Caco-2 (cell line): ENCODE measurements at regions of chr20 and their contacts with region 1.

Region 1: DNA sequence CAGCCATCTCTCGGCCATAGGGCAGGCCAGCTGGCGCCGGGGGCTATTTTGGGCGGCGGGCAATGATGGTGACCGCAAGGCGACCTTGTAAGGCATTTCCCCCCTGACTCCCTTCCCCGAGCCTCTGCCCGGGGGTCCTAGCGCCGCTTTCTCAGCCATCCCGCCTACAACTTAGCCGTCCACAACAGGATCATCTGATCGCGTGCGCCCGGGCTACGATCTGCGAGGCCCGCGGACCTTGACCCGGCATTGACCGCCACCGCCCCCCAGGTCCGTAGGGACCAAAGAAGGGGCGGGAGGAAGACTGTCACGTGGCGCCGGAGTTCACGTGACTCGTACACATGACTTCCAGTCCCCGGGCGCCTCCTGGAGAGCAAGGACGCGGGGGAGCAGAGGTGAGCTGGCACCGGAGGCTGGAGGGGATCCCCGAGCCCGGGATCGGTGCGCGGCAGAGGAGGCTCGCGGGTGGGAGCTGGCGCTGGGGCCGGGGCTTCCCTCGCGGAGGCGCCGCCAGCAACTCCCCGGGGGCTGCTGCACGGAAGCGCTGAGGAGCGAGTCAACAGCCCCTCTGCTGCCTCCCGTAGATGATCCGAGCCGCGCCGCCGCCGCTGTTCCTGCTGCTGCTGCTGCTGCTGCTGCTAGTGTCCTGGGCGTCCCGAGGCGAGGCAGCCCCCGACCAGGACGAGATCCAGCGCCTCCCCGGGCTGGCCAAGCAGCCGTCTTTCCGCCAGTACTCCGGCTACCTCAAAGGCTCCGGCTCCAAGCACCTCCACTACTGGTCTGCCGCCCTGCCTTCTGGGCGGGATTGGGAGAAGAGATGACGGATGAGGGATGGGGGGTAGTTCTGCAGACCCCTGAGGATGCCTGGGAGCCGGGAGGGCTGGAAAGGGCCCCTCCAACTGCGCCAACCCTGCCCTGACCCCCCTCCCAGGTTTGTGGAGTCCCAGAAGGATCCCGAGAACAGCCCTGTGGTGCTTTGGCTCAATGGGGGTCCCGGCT is at the starts of genes CTSA and NEURL2:
- DNase-seq: peak; percentile 99
- H3K4me3 ChIP-seq: peak within 1 kb of the TSS; percentile 94
- H3K4me3 Mint-ChIP-seq: peak within 1 kb of the TSS; percentile 95
- H3K27ac Mint-ChIP-seq: peak within 1 kb of the TSS; percentile 95
- H3K4me1 ChIP-seq: peaks cover 8% of the 10 kb centered on the region
- H3K4me1 Mint-ChIP-seq: peaks cover 36% of the 10 kb centered on the region
- H3K27me3 ChIP-seq: no peaks in the 10 kb centered on the region
- H3K27me3 Mint-ChIP-seq: no peaks in the 10 kb centered on the region
- CTCF ChIP-seq: peak; percentile 10 to 34
- total RNA-seq, gene CTSA: 282 and 294 TPM in 2 replicates
- total RNA-seq, gene NEURL2: 12.6 TPM in 2 replicates

Region 2: GRCh38 chr20:45704969-45705637 is 186.2 kb before region 1 on chr20 and contains the start of gene WFDC10B:
- CTCF ChIA-PET with region 1: no interaction called
- POLR2A ChIA-PET with region 1: no interaction called
- intact Hi-C with region 1: no loop called
- DNase-seq: no peak
- H3K4me3 ChIP-seq: no peak within 1 kb of the TSS
- H3K4me3 Mint-ChIP-seq: no peak within 1 kb of the TSS
- H3K27ac Mint-ChIP-seq: no peak within 1 kb of the TSS
- H3K4me1 ChIP-seq: no peaks in the 10 kb centered on the region
- H3K4me1 Mint-ChIP-seq: no peaks in the 10 kb centered on the region
- H3K27me3 ChIP-seq: 0 out of 2 replicates have a peak, but pooled peaks cover 3% of the 10 kb centered on the region
- H3K27me3 Mint-ChIP-seq: peaks cover 18% of the 10 kb centered on the region
- CTCF ChIP-seq: no peak
- total RNA-seq, gene WFDC10B: not detected in 2 replicates

Region 3: DNA sequence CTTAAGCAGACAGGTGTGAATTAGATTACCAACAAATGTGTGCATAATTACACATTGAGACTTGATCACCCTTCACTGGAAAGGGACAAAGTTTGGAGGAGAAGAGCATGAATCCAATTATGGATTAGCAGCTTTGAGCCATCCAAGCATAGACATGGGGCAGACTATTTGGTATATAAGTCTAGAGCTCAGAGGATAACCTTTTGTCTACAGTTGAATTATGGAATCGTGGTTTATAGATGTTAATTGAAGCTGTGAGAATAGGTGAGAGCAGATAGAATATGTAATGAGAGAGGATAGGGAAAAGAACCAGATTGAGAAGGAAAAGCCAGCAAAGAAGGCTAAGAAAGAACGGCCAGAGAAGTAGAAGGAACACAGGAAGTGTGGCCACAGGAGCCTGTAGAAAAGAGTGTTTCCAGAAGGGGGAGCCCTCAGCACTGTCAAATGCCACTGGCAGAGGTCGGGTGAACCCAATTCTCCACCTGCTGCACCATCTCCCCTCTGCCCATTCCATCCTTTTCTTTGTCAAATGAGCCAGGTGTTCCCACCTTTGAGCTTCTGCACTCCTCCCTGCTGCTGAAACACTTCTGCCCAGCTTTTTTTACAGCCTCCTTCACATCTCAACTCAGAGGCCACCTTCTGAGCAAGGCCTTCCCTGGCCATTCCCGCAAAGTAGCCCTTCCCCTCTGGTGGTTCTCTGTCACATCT is 92.2 kb before region 1 on chr20:
- CTCF ChIA-PET with region 1: interaction called, 16 read pairs
- POLR2A ChIA-PET with region 1: no interaction called
- intact Hi-C with region 1: loop called (anchors 1 kb)
- DNase-seq: peak; percentile 81 to 89
- H3K4me3 ChIP-seq: no peak overlapping the region
- H3K4me3 Mint-ChIP-seq: no peak overlapping the region
- H3K27ac Mint-ChIP-seq: no peak overlapping the region
- H3K4me1 ChIP-seq: no peaks in the 10 kb centered on the region
- H3K4me1 Mint-ChIP-seq: no peaks in the 10 kb centered on the region
- H3K27me3 ChIP-seq: no peaks in the 10 kb centered on the region
- H3K27me3 Mint-ChIP-seq: no peaks in the 10 kb centered on the region
- CTCF ChIP-seq: peak; percentile 94 to 96

Region 4: DNA sequence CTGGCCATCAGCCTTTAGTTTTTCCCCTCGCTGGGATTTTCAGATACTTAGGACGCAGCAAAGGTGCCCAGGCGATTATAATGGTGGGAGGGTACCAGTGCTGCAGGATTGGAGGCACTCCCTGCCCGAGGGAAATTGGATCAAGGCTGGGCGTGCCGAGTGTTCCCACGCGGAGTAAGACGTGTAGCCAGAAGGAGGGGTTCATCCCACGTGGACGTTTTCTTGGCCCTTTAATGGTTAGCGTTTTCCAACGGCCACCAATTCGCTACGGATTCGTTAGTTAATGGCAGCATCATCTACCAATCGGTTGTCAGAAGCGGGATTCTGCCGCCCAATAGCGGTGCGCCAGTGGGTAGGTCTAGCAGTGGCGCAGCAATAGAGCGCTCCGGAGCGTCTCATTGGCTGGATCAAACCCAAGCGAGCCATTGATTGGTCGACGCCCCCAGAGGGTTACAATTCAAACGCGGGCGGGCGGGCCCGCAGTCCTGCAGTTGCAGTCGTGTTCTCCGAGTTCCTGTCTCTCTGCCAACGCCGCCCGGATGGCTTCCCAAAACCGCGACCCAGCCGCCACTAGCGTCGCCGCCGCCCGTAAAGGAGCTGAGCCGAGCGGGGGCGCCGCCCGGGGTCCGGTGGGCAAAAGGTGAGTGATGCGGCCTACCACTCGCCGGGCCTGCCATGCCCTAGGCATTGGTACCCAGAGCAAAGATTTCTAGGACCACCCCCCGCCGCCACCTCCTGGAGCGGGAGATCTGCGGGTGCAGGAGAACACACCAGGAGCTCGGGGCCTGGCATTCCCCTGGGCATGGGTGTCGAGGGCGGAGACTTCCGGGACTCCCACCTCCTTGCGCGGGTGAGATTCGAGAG is 78.9 kb before region 1 on chr20 and contains the start of gene UBE2C:
- CTCF ChIA-PET with region 1: interaction called, 3 read pairs
- POLR2A ChIA-PET with region 1: no interaction called
- intact Hi-C with region 1: loop called (anchors 5 kb)
- DNase-seq: peak; percentile 100
- H3K4me3 ChIP-seq: peak within 1 kb of the TSS; percentile 91
- H3K4me3 Mint-ChIP-seq: peak within 1 kb of the TSS; percentile 95
- H3K27ac Mint-ChIP-seq: peak within 1 kb of the TSS; percentile 92
- H3K4me1 ChIP-seq: peaks cover 28% of the 10 kb centered on the region
- H3K4me1 Mint-ChIP-seq: peaks cover 20% of the 10 kb centered on the region
- H3K27me3 ChIP-seq: no peaks in the 10 kb centered on the region
- H3K27me3 Mint-ChIP-seq: no peaks in the 10 kb centered on the region
- CTCF ChIP-seq: no peak
- total RNA-seq, gene UBE2C: 409 and 423 TPM in 2 replicates

Region 5: GRCh38 chr20:45857114-45857881 is 34.0 kb before region 1 on chr20 and contains the starts of genes ACOT8 and ZSWIM3:
- CTCF ChIA-PET with region 1: interaction called, 3 read pairs
- POLR2A ChIA-PET with region 1: no interaction called
- intact Hi-C with region 1: loop called (anchors 1 kb)
- DNase-seq: peak; percentile 100
- H3K4me3 ChIP-seq: peak within 1 kb of the TSS; percentile 65
- H3K4me3 Mint-ChIP-seq: peak within 1 kb of the TSS; percentile 95
- H3K27ac Mint-ChIP-seq: peak within 1 kb of the TSS; percentile 85
- H3K4me1 ChIP-seq: peaks cover 17% of the 10 kb centered on the region
- H3K4me1 Mint-ChIP-seq: peaks cover 19% of the 10 kb centered on the region
- H3K27me3 ChIP-seq: no peaks in the 10 kb centered on the region
- H3K27me3 Mint-ChIP-seq: no peaks in the 10 kb centered on the region
- CTCF ChIP-seq: no peak
- total RNA-seq, gene ACOT8: 35.1 and 36.2 TPM in 2 replicates
- total RNA-seq, gene ZSWIM3: 6.1 and 6.4 TPM in 2 replicates

Region 6: DNA sequence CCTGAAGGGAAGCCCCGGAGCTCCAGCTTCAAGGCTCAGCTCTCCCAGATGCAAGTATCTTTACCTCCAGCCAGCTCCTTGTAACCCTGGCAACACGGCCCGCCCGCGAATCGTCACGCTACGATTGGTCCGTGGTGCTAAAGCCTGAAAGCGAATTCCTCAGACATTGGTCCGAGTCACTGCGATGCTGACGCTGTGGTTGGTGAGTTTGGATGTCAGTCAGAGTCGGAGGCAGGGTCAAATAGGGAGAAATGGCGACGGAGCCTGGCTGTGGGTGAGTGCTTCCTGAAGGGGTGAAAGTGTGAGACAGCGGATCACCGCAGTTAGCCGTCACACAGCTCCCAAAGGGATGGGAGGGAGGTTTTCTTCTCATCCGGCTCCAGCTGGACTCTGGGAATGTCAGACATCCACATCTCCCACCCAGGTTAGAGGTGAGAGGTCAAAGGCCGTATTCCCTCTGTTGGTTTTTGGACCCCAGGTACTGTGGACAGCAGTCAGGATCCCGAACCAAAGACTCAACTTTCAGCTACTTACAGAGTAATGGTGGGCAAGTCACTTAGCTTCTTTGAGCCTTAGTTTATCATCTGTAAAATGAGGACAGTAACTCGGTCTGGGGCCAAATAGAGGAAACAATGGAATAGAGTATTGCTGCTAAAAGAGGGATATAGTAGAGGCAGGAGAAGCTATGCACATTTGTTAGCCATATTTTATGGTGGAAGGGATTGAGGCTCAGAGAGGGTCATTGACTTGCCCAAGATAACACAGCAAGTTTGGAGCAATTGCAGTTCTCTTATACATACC is 10.1 kb before region 1 on chr20 and contains the start of gene ZSWIM1:
- CTCF ChIA-PET with region 1: interaction called, 34 read pairs
- POLR2A ChIA-PET with region 1: interaction called, 34 read pairs
- intact Hi-C with region 1: loop called (anchors 1 kb)
- DNase-seq: peak; percentile 100
- H3K4me3 ChIP-seq: peak within 1 kb of the TSS; percentile 66
- H3K4me3 Mint-ChIP-seq: peak within 1 kb of the TSS; percentile 96
- H3K27ac Mint-ChIP-seq: peak within 1 kb of the TSS; percentile 95
- H3K4me1 ChIP-seq: no peaks in the 10 kb centered on the region
- H3K4me1 Mint-ChIP-seq: peaks cover 19% of the 10 kb centered on the region
- H3K27me3 ChIP-seq: no peaks in the 10 kb centered on the region
- H3K27me3 Mint-ChIP-seq: no peaks in the 10 kb centered on the region
- CTCF ChIP-seq: no peak
- total RNA-seq, gene ZSWIM1: 24.8 and 27.3 TPM in 2 replicates

Region 7: GRCh38 chr20:45924391-45925261 is 33.3 kb after region 1 on chr20:
- CTCF ChIA-PET with region 1: interaction called, 17 read pairs
- POLR2A ChIA-PET with region 1: interaction called, 8 read pairs
- intact Hi-C with region 1: no loop called
- DNase-seq: no peak
- H3K4me3 ChIP-seq: no peak overlapping the region
- H3K4me3 Mint-ChIP-seq: no peak overlapping the region
- H3K27ac Mint-ChIP-seq: no peak overlapping the region
- H3K4me1 ChIP-seq: peaks cover 34% of the 10 kb centered on the region
- H3K4me1 Mint-ChIP-seq: peaks cover 15% of the 10 kb centered on the region
- H3K27me3 ChIP-seq: no peaks in the 10 kb centered on the region
- H3K27me3 Mint-ChIP-seq: no peaks in the 10 kb centered on the region
- CTCF ChIP-seq: no peak

Region 8: GRCh38 chr20:45963059-45964005 is 72.0 kb after region 1 on chr20:
- CTCF ChIA-PET with region 1: interaction called, 13 read pairs
- POLR2A ChIA-PET with region 1: no interaction called
- intact Hi-C with region 1: loop called (anchors 1 kb)
- DNase-seq: peak; percentile 77 to 78
- H3K4me3 ChIP-seq: no peak overlapping the region
- H3K4me3 Mint-ChIP-seq: no peak overlapping the region
- H3K27ac Mint-ChIP-seq: no peak overlapping the region
- H3K4me1 ChIP-seq: no peaks in the 10 kb centered on the region
- H3K4me1 Mint-ChIP-seq: no peaks in the 10 kb centered on the region
- H3K27me3 ChIP-seq: no peaks in the 10 kb centered on the region
- H3K27me3 Mint-ChIP-seq: no peaks in the 10 kb centered on the region
- CTCF ChIP-seq: peak; percentile 70 to 88